Activated T-helper 1 cell treated with anti-CD3 and anti-CD28 coated beads, Interleukin-12 subunit alpha, Interleukin-12 subunit beta, Interleukin-2, Interleukin-4 antibody, amounts not matched to agents 30 ng/mL and 10 ng/mL and 1 ng/mL, durations not matched to agents 14 hours and 24 hours and 36 hours (primary cell): ENCODE measurements at regions of chr9 and their contacts with region 1.

Region 1: DNA sequence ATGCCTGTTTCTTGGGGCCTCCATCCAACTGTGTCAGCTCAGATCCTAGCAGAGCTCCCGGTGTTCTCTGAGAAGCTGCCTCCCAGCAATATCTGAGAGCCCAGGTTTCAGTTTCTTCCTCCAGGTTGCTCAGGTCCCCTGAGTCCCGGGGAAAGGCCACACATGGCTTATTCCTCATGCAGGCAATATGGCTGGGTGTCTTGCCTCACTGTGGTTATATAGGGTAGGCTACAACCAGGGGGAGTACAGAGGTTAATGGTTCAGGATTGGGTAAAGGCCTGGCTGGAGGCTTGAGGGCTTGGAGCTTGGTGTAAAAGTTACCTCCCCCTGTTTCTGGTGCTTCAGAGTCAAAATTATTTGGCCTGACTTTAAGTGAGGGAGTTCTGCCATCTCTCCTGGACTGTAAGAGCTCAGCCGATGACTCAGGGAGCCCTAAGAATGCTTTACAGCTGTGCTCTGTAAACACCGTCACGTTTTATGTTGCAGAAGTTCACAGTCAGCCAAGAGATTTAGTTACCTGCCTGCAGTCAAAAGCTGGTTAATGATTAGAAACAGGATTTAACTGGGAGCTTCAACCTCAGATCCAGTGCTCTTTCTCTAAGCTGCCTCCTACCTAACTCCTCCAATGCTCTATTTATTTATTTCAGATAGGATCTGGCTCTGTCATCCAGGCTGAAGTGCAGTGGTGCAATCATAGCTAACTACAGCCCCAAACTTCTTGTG is 24.3 kb upstream of the UBAP2 start:
- DNase-seq: no peak
- H3K4me3 Mint-ChIP-seq: no peak overlapping the region
- H3K27ac Mint-ChIP-seq: no peak overlapping the region
- H3K4me1 Mint-ChIP-seq: peaks cover 5% of the 10 kb centered on the region
- H3K27me3 Mint-ChIP-seq: no peaks in the 10 kb centered on the region

Region 2: DNA sequence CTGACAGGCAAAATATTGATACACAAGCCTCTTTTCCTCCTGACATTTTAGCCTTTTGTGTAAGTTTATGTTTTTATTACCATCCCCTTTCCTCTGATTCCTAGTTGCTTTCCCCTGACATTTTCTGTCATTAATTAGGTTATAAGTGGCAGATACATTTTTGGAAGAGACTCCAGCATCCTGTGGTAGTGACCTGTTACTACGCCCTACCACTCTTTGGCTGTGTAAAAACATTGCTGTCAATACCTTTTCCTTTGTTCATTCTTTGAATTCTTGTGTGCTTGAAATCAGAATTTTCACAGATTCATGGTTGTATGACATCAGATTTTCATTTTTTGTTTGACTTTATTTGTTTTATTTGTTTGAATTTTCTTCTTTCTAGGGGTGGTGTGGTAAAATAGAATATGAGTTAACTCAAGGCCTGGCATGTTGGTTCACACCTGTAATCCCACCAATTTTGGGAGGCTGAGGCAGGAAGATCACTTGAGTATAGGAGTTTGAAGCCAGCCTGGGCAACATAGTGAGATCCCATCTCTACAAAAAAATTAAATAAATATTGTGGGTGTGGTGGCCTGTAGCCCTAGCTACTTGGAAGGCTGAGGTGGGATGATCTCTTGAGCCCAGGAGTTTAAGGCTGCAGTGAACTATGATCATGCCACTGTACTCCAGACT is 212.7 kb before region 1 on chr9:
- intact Hi-C with region 1: no loop called
- DNase-seq: no peak
- H3K4me3 Mint-ChIP-seq: no peak overlapping the region
- H3K27ac Mint-ChIP-seq: no peak overlapping the region
- H3K4me1 Mint-ChIP-seq: peaks cover 5% of the 10 kb centered on the region
- H3K27me3 Mint-ChIP-seq: no peaks in the 10 kb centered on the region

Region 3: DNA sequence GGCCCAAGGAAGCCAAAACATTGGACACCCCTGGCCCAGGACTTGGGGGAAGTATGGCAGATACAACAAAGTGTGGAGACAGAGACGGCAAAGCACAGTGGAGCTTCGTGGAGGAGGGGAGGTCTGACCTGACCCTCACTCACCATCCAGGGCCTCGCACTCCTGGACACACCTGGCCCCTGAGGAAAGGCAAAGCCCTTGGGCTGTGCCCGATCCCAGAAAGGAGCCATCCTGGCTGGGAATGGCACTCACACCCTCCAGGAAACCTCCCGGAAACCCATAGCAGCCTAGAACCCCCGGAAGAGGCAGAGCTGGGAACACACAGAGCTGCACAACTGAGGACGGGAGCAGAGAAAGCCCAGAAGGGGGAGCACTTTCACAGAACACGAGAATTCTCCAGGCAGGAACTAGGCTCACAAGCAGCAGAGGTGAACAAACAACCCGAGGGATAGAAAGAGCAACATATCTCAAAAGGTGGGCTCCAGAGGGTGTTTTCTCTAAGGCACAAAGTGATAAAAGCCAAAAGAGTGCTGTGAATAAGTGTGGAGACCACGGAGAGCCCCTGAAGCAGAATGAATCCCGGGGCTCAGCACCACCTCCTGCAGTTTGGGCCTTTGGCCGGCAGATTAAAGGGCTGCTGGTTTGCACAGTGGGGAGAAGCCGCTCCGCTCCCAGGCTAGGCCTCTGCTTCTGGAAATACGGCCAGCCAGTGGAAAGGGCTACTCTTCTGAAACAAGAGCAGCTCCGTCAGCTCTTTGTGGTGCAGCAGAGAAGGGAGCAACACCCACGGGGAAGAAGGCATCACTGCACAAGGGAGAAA is 147.8 kb before region 1 on chr9:
- intact Hi-C with region 1: loop called (anchors 5 kb)
- DNase-seq: no peak
- H3K4me3 Mint-ChIP-seq: no peak overlapping the region
- H3K27ac Mint-ChIP-seq: no peak overlapping the region
- H3K4me1 Mint-ChIP-seq: no peaks in the 10 kb centered on the region
- H3K27me3 Mint-ChIP-seq: no peaks in the 10 kb centered on the region

Region 4: GRCh38 chr9:34010979-34011378 is 62.0 kb before region 1 on chr9:
- intact Hi-C with region 1: loop called (anchors 1 kb)
- DNase-seq: no peak
- H3K4me3 Mint-ChIP-seq: no peak overlapping the region
- H3K27ac Mint-ChIP-seq: no peak overlapping the region
- H3K4me1 Mint-ChIP-seq: no peaks in the 10 kb centered on the region
- H3K27me3 Mint-ChIP-seq: no peaks in the 10 kb centered on the region

Region 5: GRCh38 chr9:34637356-34638137 is 564.5 kb after region 1 on chr9 and contains the start of gene SIGMAR1:
- intact Hi-C with region 1: no loop called
- DNase-seq: peak; percentile 94
- H3K4me3 Mint-ChIP-seq: peak within 1 kb of the TSS; percentile 97
- H3K27ac Mint-ChIP-seq: peak within 1 kb of the TSS; percentile 88
- H3K4me1 Mint-ChIP-seq: peaks cover 39% of the 10 kb centered on the region
- H3K27me3 Mint-ChIP-seq: no peaks in the 10 kb centered on the region
- total RNA-seq, gene SIGMAR1: 128 and 130 TPM in 2 replicates